Naive thymus-derived CD4-positive, alpha-beta T cell (primary cell): ENCODE measurements at regions of chr17 and their contacts with region 1.

Region 1: GRCh38 chr17:39461113-39461925 is at the start of gene CDK12:
- DNase-seq: peak; percentile 76 to 98 (median 95)
- ATAC-seq: peak; percentile 91
- H3K4me3 ChIP-seq: peak within 1 kb of the TSS; percentile 73
- H3K4me3 Mint-ChIP-seq: peak within 1 kb of the TSS; percentile 93 to 100 (median 98)
- H3K27ac ChIP-seq: peak within 1 kb of the TSS; percentile 89
- H3K27ac Mint-ChIP-seq: peak within 1 kb of the TSS; percentile 89 to 99 (median 97)
- H3K4me1 ChIP-seq: peaks cover 8 to 13% of the 10 kb centered on the region in 2 donors
- H3K4me1 Mint-ChIP-seq: peaks cover 27 to 51% (median 41%) of the 10 kb centered on the region in 7 donors
- H3K27me3 ChIP-seq: no peaks in the 10 kb centered on the region
- H3K27me3 Mint-ChIP-seq: no peaks in the 10 kb centered on the region
- total RNA-seq, gene CDK12: 94.9 to 118 (median 112) TPM

Region 2: DNA sequence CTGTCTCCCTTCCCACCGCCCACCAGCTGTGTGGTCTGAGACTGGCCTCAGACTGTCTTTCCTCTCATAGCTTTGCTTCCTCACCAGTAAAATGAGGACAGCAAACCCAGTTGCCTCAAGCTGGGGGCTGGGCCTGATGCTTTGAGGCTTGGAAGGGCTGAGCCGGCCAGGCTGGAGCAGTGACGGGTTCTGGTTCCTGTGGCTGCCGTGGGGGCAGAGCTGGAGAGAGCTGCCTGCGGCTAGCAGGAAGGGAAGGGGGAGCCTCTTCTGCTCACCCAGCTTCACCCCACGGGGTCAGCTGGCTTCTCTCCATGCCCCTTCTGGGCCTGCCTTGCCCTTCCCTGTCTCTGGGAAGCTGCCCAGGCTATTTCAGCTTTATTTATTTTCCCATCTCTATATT is 567.7 kb before region 1 on chr17:
- CTCF ChIA-PET with region 1: interaction called, 11 read pairs
- POLR2A ChIA-PET with region 1: no interaction called
- intact Hi-C with region 1: no loop called
- DNase-seq: no peak
- ATAC-seq: peak; percentile 40
- H3K4me3 ChIP-seq: no peak overlapping the region
- H3K4me3 Mint-ChIP-seq: peak overlapping the region in 4 of 10 donors; percentile 12 to 72 (median 48)
- H3K27ac ChIP-seq: peak overlapping the region; percentile 52
- H3K27ac Mint-ChIP-seq: peak overlapping the region; percentile 54 to 95 (median 88)
- H3K4me1 ChIP-seq: peaks cover 80 to 90% of the 10 kb centered on the region in 2 donors
- H3K4me1 Mint-ChIP-seq: peaks cover 43 to 89% (median 79%) of the 10 kb centered on the region in 7 donors
- H3K27me3 ChIP-seq: no peaks in the 10 kb centered on the region
- H3K27me3 Mint-ChIP-seq: no peaks in the 10 kb centered on the region

Region 3: DNA sequence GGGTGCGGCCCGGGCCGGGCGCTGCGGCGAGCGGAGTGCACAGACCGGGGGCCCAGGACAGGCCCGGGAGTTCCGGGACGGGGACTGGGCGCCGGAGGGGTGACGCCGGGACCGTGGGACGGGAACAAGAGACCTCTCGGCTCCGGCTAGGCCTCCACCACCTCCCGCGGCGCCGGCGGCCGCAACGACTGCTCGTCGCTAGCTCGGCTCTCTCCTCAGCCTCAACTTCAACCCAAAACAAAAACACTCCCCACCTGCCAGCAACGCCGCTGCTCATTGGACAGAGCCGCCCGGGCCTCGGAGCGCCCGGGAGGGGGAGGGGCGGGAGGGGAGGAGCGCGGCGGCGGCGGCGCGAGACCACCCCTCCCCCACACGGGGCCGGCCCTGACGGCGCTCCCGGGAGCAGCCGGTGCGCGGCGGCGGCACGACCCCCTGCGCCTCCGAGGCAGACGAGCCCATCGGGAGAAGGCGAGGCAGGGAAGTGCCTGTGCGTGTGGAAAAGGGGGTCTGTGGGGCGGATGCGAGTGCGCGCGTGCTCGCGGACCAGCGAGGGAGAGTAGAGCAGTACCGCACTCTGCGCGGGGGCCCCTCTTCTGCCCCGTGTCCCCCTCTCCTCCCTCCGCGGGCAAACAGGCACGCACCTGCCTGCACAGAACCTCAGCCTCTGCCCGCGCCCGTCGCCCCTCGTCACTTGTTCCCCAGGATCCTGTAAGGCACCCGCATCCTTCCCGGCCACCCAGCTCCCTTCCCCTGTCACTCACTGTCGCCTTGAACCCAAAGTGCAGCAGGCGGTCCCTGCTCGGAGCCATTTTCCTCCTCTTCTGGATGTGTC is 59.7 kb before region 1 on chr17 and contains the start of gene FBXL20:
- CTCF ChIA-PET with region 1: interaction called, 4 read pairs
- POLR2A ChIA-PET with region 1: interaction called, 23 read pairs
- intact Hi-C with region 1: loop called (anchors 1 kb)
- DNase-seq: peak; percentile 85 to 94 (median 91)
- ATAC-seq: peak; percentile 89
- H3K4me3 ChIP-seq: peak within 1 kb of the TSS; percentile 84
- H3K4me3 Mint-ChIP-seq: peak within 1 kb of the TSS; percentile 93 to 99 (median 98)
- H3K27ac ChIP-seq: peak within 1 kb of the TSS; percentile 90
- H3K27ac Mint-ChIP-seq: peak within 1 kb of the TSS; percentile 86 to 99 (median 96)
- H3K4me1 ChIP-seq: peaks cover 6 to 13% of the 10 kb centered on the region in 2 donors
- H3K4me1 Mint-ChIP-seq: peaks cover 18 to 56% (median 44%) of the 10 kb centered on the region in 7 donors
- H3K27me3 ChIP-seq: no peaks in the 10 kb centered on the region
- H3K27me3 Mint-ChIP-seq: no peaks in the 10 kb centered on the region
- total RNA-seq, gene FBXL20: 17.6 to 35.0 (median 26.1) TPM

Region 4: DNA sequence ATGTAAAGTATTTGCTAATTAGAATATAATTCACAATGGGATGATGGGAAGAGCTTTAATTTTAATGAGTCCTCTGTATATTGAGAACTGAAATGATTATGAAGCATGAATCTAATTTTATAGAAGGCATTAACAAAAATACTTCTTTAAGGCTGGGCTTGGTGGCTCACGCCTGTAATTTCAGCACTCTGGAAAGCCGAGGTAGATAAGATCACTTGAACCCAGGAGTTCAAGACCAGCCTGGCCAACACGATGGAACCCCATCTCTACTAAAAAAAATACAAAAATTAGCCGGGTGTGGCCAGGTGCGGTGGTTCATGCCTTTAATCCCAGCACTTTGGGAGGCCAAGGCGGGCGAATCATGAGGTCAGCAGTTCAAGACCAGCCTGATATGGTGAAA is 12.0 kb after region 1 on chr17:
- CTCF ChIA-PET with region 1: no interaction called
- POLR2A ChIA-PET with region 1: interaction called, 4 read pairs
- intact Hi-C with region 1: loop called in 1 of 2 experiments (anchors 1 kb)
- DNase-seq: no peak
- ATAC-seq: no peak
- H3K4me3 ChIP-seq: no peak overlapping the region
- H3K4me3 Mint-ChIP-seq: no peak overlapping the region
- H3K27ac ChIP-seq: no peak overlapping the region
- H3K27ac Mint-ChIP-seq: no peak overlapping the region
- H3K4me1 ChIP-seq: no peaks in the 10 kb centered on the region
- H3K4me1 Mint-ChIP-seq: peaks cover 6 to 16% (median 7%) of the 10 kb centered on the region in 7 donors
- H3K27me3 ChIP-seq: no peaks in the 10 kb centered on the region
- H3K27me3 Mint-ChIP-seq: no peaks in the 10 kb centered on the region

Region 5: GRCh38 chr17:39687811-39688518 is 226.6 kb after region 1 on chr17 and contains the start of gene PGAP3:
- CTCF ChIA-PET with region 1: no interaction called
- POLR2A ChIA-PET with region 1: interaction called, 4 read pairs
- intact Hi-C with region 1: loop called in 1 of 2 experiments (anchors 1 kb)
- DNase-seq: peak; percentile 71 to 86 (median 83)
- ATAC-seq: peak; percentile 95
- H3K4me3 ChIP-seq: peak within 1 kb of the TSS; percentile 93
- H3K4me3 Mint-ChIP-seq: peak within 1 kb of the TSS; percentile 87 to 99 (median 98)
- H3K27ac ChIP-seq: peak within 1 kb of the TSS; percentile 77
- H3K27ac Mint-ChIP-seq: peak within 1 kb of the TSS; percentile 93 to 99 (median 98)
- H3K4me1 ChIP-seq: peaks cover 8 to 18% of the 10 kb centered on the region in 2 donors
- H3K4me1 Mint-ChIP-seq: peaks cover 19 to 32% (median 30%) of the 10 kb centered on the region in 7 donors
- H3K27me3 ChIP-seq: no peaks in the 10 kb centered on the region
- H3K27me3 Mint-ChIP-seq: no peaks in the 10 kb centered on the region
- total RNA-seq, gene PGAP3: 26.3 to 39.9 (median 35.1) TPM